WTC11 (cell line): ENCODE measurements at regions of chr6 and their contacts with region 1.

Region 1: DNA sequence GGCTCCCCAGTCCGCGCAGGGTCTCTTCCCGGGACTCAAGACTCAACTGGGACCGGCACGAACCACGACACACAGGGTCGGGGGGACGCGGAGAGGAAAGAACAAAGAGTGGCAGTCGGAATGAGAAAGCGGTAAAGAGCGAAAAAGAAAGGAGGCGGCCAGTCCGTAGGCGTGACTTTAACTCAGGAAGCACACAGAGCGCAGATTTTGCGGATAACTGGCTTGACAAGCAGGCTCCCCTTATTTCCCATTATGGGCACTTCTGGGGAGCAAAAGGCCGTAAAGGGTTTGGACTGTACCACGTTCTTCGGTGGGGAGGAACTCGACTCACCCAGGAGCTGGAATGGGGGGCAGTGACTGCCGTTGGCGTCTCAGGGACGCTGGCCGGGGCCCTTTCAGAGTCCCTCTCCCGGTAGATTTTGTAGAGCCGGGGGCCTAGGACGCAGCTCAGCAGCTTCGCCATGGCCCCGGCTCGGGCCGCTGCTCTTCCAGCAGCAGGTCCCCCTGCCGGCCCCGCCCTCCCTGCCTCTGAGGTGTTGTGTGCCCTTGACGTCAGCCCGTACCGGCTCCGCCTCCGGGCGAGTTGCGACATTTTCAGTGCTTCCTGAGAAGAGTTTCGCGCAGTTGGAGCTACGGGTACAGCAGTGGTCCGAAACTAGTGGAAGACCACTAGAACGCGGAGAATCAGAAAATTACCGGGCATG is at the start of gene ABHD16A:
- DNase-seq: peak; percentile 98
- ATAC-seq: peak; percentile 95
- H3K4me3 Mint-ChIP-seq: peak within 1 kb of the TSS; percentile 95
- H3K27ac Mint-ChIP-seq: peak within 1 kb of the TSS; percentile 99
- H3K4me1 Mint-ChIP-seq: peaks cover 12% of the 10 kb centered on the region
- H3K27me3 Mint-ChIP-seq: peaks cover 7% of the 10 kb centered on the region; the same call in 1 of the 2 replicates
- CTCF ChIP-seq: no peak
- total RNA-seq, gene ABHD16A: 28.6 to 30.3 TPM (median 29.8 TPM) in 3 replicates

Region 2: GRCh38 chr6:31631681-31632278 is 71.2 kb before region 1 on chr6:
- CTCF ChIA-PET with region 1: no interaction called
- POLR2A ChIA-PET with region 1: no interaction called
- DNase-seq: no peak
- ATAC-seq: no peak; the same call in 1 of the 2 replicates
- H3K4me3 Mint-ChIP-seq: no peak overlapping the region
- H3K27ac Mint-ChIP-seq: peak overlapping the region; percentile 82
- H3K4me1 Mint-ChIP-seq: no peaks in the 10 kb centered on the region
- H3K27me3 Mint-ChIP-seq: no peaks in the 10 kb centered on the region; the same call in 1 of the 2 replicates
- CTCF ChIP-seq: no peak

Region 3: GRCh38 chr6:31689249-31690110 is 13.5 kb before region 1 on chr6:
- CTCF ChIA-PET with region 1: interaction called, 15 read pairs
- POLR2A ChIA-PET with region 1: interaction called, 4 read pairs
- DNase-seq: peak; percentile 69
- ATAC-seq: peak; percentile 86
- H3K4me3 Mint-ChIP-seq: no peak overlapping the region
- H3K27ac Mint-ChIP-seq: no peak overlapping the region
- H3K4me1 Mint-ChIP-seq: no peaks in the 10 kb centered on the region
- H3K27me3 Mint-ChIP-seq: no peaks in the 10 kb centered on the region
- CTCF ChIP-seq: no peak